ENCODE measurements at regions of chr5 and their contacts with region 1.

Region 1: DNA sequence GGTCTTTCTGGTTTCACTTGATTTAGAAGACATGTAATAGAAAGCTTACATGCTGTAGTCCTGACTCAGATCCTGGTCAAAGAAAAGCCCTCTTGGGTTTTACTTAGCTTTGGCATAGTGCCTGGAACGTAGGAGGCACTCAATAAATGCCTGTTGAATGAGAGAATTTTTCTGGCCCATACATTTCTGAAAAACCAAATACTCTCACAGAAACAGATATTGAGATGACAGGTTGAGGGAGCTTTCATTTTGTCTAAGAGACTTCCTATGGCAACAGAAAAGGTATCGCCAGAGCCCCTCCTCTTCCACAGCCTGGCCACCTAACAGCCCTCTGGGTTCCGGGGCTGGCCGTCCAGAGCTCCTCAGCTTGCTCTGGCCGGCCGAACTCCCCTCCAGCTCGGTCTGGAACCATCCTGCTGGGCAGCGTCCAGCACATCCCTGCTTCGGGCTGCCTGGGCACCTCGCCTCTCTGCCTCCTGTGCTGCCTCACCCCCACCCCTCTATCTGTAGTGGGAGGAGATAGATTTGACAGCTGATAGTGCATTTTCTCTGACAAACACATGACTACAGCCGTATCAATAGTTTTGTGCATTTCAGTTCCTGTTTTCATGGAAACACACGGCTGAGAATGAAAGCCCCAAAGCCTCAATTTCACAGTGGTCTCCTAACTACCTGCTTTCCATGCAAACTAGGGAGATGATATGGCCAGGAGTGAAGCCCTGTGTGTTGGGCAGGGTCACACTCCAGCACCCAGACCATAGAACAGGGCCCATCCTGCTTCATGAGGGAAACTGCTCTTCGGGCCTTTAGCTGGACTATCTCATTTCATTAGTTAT is 1.1 kb downstream of the IL4 start:
- DNase-seq: peak; percentile 40
- H3K4me3 Mint-ChIP-seq: peak overlapping the region; percentile 68
- H3K27ac Mint-ChIP-seq: peak overlapping the region; percentile 87
- H3K4me1 Mint-ChIP-seq: peaks cover 41% of the 10 kb centered on the region
- H3K27me3 Mint-ChIP-seq: no peaks in the 10 kb centered on the region

Region 2: DNA sequence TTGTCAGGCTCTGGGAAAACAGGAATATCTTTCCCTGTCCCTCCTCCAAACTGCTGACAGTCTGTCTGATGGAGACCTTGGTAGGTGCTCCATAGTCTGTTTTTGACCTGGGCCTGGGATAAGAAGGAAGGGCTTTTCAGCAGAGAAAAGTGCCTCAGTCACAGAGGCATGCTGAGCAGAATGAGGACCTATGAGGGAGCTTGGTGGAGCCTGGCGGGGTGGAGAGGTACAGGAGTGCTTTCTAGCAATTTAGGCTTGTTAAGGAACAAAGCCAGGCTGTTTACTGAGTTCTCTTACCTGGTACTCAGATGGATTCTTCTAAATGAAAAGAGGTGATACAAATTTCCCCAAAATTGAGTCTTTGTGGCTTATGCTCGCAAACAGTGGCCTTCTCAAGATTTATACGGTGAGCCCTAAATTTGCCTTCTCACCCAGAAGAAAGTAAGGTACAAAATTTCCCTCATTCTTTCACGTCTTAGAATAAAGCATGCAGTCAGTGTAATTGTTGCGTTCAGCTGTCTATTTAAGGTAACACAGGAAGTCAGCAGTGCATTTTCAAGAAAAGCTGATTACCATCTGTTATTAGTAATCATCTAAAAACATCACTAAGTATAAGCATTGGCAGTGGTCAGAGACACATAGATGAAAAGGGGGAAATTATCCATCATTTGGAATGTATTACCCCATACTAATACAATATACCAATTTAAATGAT is 45.5 kb before region 1 on chr5:
- CTCF ChIA-PET with region 1: no interaction called
- POLR2A ChIA-PET with region 1: interaction called, 11 read pairs
- DNase-seq: no peak
- H3K4me3 Mint-ChIP-seq: peak overlapping the region; percentile 25
- H3K27ac Mint-ChIP-seq: peak overlapping the region; percentile 83
- H3K4me1 Mint-ChIP-seq: peaks cover 42% of the 10 kb centered on the region
- H3K27me3 Mint-ChIP-seq: no peaks in the 10 kb centered on the region

Region 3: DNA sequence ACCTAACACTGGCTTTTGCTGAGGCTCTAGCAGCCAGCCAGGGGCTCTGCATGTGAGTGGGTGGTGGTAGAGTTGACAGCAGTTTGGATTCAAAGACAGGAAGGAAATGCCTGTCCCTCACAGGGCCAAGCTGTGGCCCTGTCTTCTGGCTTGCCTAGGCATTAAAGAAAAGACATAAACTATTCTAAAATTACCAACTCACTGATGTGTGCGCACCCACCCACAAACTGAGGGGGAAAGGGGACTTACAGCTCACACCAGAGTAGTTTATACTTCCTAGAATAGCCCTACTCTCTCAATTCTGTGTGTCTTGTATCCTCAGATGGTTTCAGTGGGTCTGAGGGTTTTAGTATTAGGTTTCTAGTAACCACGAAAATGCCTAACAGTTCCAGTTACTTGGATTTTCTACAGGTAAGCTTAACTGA is 35.2 kb before region 1 on chr5:
- CTCF ChIA-PET with region 1: no interaction called
- POLR2A ChIA-PET with region 1: interaction called, 12 read pairs
- DNase-seq: peak; percentile 43
- H3K4me3 Mint-ChIP-seq: no peak overlapping the region
- H3K27ac Mint-ChIP-seq: peak overlapping the region; percentile 82
- H3K4me1 Mint-ChIP-seq: peaks cover 81% of the 10 kb centered on the region
- H3K27me3 Mint-ChIP-seq: no peaks in the 10 kb centered on the region

Region 4: DNA sequence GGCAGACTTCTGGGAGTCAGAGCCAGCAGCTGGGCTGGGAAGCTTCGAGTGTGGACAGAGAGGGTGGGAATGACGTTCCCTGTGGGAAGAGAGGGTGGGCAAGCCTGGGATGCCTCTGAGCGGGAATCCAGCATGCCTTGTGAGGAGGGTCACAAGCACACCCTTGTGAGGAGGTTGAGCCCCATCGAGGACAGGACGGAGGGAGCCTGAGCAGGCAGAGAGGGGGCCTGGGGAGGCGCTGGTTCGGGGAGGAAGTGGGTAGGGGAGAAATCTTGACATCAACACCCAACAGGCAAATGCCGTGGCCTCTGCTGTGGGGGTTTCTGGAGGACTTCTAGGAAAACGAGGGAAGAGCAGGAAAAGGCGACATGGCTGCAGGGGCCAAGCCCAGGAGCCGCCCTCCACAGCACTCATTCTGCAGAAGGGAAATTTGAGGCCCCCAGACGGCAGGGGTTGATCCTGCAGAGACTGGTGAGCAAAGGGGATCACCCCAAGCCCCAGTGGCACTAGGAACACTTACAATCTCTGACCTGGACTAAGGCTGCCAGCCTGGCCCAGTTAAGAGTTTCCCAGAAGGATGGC is 18.0 kb before region 1 on chr5:
- CTCF ChIA-PET with region 1: no interaction called
- POLR2A ChIA-PET with region 1: interaction called, 12 read pairs
- DNase-seq: no peak
- H3K4me3 Mint-ChIP-seq: peak overlapping the region; percentile 44
- H3K27ac Mint-ChIP-seq: peak overlapping the region; percentile 10
- H3K4me1 Mint-ChIP-seq: peaks cover 43% of the 10 kb centered on the region
- H3K27me3 Mint-ChIP-seq: peaks cover 22% of the 10 kb centered on the region

Region 5: DNA sequence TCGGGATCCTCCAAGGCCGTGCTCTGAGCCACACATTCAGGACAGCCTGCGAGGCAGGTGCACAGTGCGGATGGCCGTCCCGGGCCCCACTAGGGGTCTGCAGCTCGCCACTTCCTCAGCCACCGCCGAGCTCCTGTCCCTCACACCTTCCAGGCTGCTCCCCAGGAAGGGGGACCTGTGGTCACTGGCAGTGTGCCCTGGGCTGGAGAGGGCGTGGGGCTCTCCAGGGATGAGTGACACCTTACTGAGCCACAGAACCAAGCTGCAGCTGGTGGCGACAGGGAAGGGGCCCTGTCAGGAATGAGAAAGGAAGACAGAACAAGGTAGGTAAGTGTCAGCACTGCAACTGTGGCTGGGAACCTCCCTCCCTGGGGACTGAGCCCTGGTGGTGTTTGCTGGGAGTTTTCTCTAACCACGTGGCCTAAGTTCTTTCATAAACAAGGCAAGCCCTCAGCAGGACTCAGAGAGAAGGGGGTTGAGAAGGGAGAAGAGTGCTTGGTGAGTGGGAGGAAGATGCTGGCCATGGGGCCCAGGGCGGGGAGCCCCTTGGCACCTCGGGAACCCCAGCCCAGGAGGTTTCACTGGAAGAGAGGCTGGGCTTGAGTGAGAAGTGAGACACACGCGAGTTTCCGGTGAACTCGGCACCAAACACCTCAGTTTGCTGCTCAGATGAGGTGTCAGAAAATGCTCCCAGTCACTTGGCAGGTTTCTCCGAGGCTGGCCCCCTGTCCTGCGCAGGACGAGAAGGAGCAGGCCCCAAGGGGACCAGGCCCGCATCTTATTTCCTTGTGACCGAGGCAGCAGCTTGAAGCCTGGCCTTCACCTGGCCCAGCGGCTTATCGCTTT is 11.7 kb before region 1 on chr5:
- CTCF ChIA-PET with region 1: no interaction called
- POLR2A ChIA-PET with region 1: interaction called, 25 read pairs
- DNase-seq: peak; percentile 61
- H3K4me3 Mint-ChIP-seq: no peak overlapping the region
- H3K27ac Mint-ChIP-seq: peak overlapping the region; percentile 89
- H3K4me1 Mint-ChIP-seq: peaks cover 68% of the 10 kb centered on the region
- H3K27me3 Mint-ChIP-seq: no peaks in the 10 kb centered on the region

Region 6: DNA sequence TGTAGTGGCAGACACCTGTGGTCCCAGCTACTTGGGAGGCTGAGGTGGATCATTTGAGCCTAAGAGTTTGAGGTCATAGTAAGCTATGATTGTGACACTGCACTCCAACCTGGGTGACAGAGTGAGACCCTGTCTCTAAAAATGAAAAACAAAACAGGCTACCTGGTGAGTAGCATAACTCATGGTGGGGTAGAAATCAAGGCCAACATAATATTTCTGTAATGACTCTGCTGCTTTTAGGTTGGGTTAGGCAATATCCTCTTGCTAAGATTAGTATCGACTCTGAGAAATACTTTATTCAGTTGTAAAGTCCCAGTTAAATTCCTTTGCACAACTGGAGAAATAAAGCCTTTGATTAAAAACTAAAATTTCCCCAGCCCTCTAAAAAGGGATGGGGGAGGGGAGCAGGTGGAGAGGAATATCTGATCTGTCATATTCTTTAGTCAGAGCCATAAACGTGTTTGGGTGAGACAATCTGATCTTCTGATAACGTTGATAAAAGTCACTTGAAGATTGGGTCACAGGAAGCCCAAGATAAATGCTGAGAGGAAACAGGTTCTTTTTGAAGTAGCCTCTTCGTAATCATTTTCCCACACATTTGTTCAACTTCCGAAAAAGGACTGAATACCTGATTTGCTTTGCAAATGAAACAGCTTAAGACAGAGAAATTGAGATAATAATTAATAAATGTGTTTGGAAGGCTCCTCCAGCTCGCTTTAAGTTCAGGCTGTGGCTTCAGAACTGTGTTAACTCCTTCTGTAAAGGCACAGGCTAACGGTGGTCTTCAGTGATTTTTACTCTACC is 13.8 kb after region 1 on chr5:
- CTCF ChIA-PET with region 1: no interaction called
- POLR2A ChIA-PET with region 1: interaction called, 16 read pairs
- DNase-seq: no peak
- H3K4me3 Mint-ChIP-seq: no peak overlapping the region
- H3K27ac Mint-ChIP-seq: peak overlapping the region; percentile 83
- H3K4me1 Mint-ChIP-seq: peaks cover 56% of the 10 kb centered on the region
- H3K27me3 Mint-ChIP-seq: peaks cover 4% of the 10 kb centered on the region

Region 7: DNA sequence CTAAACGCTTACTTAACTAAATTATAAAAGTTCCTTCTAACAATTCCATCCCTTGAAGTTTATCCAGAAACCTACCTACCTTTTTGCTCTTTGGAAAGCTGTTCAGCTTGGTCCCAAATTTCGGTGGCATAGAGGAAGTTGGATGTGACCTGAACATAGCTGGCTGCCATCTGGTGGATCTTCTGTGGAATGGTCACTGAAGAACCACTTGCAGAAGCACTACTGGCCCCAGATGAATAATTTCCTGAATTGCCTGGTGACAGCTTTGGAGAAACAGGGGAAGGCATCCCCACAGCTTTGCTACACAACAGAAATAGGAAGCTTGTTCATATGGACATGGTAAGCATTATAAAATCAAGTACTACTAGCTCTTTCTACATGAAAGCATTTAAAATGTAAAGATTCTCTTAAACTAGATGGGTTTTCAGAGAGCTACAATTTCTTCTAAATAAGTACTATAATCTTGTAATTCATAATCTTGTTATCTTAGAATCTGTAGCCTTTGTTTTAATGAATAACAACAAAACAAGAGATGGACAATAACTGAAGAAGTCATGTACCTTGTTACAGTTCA is 208.5 kb after region 1 on chr5:
- CTCF ChIA-PET with region 1: no interaction called
- POLR2A ChIA-PET with region 1: no interaction called
- DNase-seq: peak; percentile 29
- H3K4me3 Mint-ChIP-seq: no peak overlapping the region
- H3K27ac Mint-ChIP-seq: peak overlapping the region; percentile 37
- H3K4me1 Mint-ChIP-seq: peaks cover 10% of the 10 kb centered on the region
- H3K27me3 Mint-ChIP-seq: no peaks in the 10 kb centered on the region